ENCODE measurements at regions of chr7 and their contacts with region 1.

Region 1: DNA sequence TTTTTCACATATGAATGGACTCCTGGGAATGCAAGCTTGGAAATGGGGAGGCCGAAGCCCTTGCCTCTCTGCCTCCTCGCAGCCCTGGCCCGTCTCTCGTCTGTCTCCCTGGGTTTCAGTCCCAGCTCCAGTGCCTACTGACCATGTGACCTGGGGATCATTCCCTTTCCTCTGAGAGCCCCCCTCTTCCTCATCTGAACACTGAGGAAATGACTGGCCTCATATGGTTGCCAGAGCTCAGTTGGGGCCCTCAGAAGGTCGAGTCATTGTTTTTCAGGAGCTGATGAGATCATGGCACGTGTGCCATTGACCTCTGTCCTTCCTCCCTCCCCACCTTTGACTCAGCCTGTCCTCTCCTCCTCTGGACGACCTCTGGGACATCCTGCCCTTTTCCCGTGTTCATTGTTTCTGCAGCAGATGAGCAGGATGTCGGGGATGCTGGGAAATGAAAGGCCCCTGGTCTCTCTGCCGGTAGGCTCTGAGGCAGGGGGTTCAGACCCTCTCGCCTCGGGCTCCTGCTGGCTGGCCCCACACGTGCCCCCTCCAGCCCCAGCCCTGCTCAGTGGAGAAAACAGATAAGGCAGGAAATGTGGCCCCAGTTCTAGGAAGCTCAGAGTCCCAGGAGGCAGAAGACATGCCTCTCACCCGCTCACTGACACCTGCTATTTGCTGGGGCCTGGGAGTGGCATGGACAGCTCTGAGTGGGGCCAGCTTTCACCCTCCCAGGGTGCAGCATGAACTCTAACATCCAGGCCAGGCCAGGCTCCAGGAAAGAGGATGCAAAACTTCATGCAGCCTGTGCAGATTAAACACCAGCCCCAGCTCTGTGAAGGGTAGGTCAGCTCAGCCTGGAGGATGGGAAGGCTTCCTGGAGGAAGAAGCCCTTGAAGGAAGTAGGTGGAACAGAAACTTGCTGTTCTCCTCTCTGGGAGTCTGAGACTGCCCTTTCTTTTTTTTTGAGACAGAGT is 8.3 kb upstream of the PPP1R35 start:
- DNase-seq: peak; percentile 81 to 92 (median 85)
- H3K4me3 ChIP-seq: no peak overlapping the region
- H3K4me3 Mint-ChIP-seq: peak overlapping the region; percentile 12 to 33
- H3K27ac ChIP-seq: peak overlapping the region; percentile 25 to 53
- H3K27ac Mint-ChIP-seq: peak overlapping the region; percentile 76 to 95 (median 89)
- H3K4me1 ChIP-seq: peaks cover 23 to 31% of the 10 kb centered on the region in 2 donors
- H3K4me1 Mint-ChIP-seq: peaks cover 37% of the 10 kb centered on the region
- H3K27me3 ChIP-seq: no peaks in the 10 kb centered on the region
- H3K27me3 Mint-ChIP-seq: peaks cover 0 to 1% (median 0%) of the 10 kb centered on the region in 3 donors
- CTCF ChIP-seq: no peak

Region 2: DNA sequence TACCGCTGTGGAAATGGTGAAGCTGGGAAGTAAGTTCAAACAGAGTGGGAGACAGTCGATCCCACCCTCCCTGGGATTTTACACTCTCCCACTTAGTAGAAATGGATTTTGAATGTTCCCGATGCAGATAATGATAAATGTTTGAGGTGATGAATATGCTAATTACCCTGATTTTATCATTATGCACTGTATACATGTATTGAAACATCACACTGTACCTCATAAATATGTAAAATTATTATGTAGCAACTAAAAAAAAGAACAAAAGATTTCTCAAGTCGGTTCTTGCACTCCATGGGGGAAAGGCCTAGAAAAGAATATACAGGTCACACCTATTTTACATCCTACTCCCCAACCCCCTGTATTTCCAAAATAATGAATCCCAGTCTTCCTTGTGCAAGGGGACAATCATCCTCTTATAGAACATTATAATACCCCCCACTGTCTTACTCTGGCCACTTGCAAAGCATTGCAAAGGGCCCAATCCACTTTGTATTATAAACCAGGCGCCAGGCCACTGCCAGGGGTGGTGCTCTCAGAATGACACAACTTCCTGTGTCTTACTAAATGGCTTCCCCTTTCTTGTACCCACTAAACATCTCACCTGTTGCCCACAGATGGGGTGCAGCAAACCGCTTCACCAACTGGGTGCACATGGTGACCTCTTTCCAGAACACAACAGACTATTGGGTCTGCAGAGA is 547.1 kb before region 1 on chr7:
- intact Hi-C with region 1: no loop called
- DNase-seq: no peak
- H3K4me3 ChIP-seq: no peak overlapping the region
- H3K4me3 Mint-ChIP-seq: no peak overlapping the region
- H3K27ac ChIP-seq: no peak overlapping the region
- H3K27ac Mint-ChIP-seq: peak overlapping the region in 1 of 7 donors; percentile 44
- H3K4me1 ChIP-seq: peaks cover 4 to 7% of the 10 kb centered on the region in 2 donors
- H3K4me1 Mint-ChIP-seq: peaks cover 7% of the 10 kb centered on the region
- H3K27me3 ChIP-seq: no peaks in the 10 kb centered on the region
- H3K27me3 Mint-ChIP-seq: no peaks in the 10 kb centered on the region
- CTCF ChIP-seq: no peak

Region 3: GRCh38 chr7:100137851-100138760 is 306.5 kb before region 1 on chr7:
- intact Hi-C with region 1: no loop called
- DNase-seq: no peak
- H3K4me3 ChIP-seq: no peak overlapping the region
- H3K4me3 Mint-ChIP-seq: no peak overlapping the region
- H3K27ac ChIP-seq: no peak overlapping the region
- H3K27ac Mint-ChIP-seq: peak overlapping the region in 1 of 7 donors; percentile 32
- H3K4me1 ChIP-seq: peaks cover 18 to 23% of the 10 kb centered on the region in 2 donors
- H3K4me1 Mint-ChIP-seq: peaks cover 21% of the 10 kb centered on the region
- H3K27me3 ChIP-seq: no peaks in the 10 kb centered on the region
- H3K27me3 Mint-ChIP-seq: peaks cover 4 to 12% (median 5%) of the 10 kb centered on the region in 3 donors
- CTCF ChIP-seq: no peak

Region 4: GRCh38 chr7:100428199-100428966 is 16.2 kb before region 1 on chr7 and contains the start of gene ZCWPW1:
- intact Hi-C with region 1: loop called in 1 of 2 experiments (anchors 2 kb)
- DNase-seq: peak; percentile 91 to 97 (median 95)
- H3K4me3 ChIP-seq: peak within 1 kb of the TSS; percentile 77 to 93 (median 80)
- H3K4me3 Mint-ChIP-seq: peak within 1 kb of the TSS; percentile 96 to 99
- H3K27ac ChIP-seq: peak within 1 kb of the TSS; percentile 99 to 100
- H3K27ac Mint-ChIP-seq: peak within 1 kb of the TSS; percentile 99 to 100 (median 100)
- H3K4me1 ChIP-seq: peaks cover 23 to 31% of the 10 kb centered on the region in 2 donors
- H3K4me1 Mint-ChIP-seq: peaks cover 29% of the 10 kb centered on the region
- H3K27me3 ChIP-seq: no peaks in the 10 kb centered on the region
- H3K27me3 Mint-ChIP-seq: peaks cover 1 to 6% (median 1%) of the 10 kb centered on the region in 3 donors
- CTCF ChIP-seq: no peak
- polyA plus RNA-seq, gene ZCWPW1: 0.60 to 1.9 (median 1.2) TPM

Region 5: GRCh38 chr7:100563809-100564400 is 119.3 kb after region 1 on chr7:
- intact Hi-C with region 1: no loop called
- DNase-seq: peak in 2 of 3 donors; percentile 65 to 69
- H3K4me3 ChIP-seq: no peak overlapping the region
- H3K4me3 Mint-ChIP-seq: peak overlapping the region in 1 of 2 donors; percentile 59
- H3K27ac ChIP-seq: no peak overlapping the region
- H3K27ac Mint-ChIP-seq: peak overlapping the region in 1 of 7 donors; percentile 28
- H3K4me1 ChIP-seq: peaks cover 0 to 10% of the 10 kb centered on the region in 2 donors
- H3K4me1 Mint-ChIP-seq: peaks cover 10% of the 10 kb centered on the region
- H3K27me3 ChIP-seq: peaks cover 0 to 2% of the 10 kb centered on the region in 2 donors
- H3K27me3 Mint-ChIP-seq: peaks cover 0 to 7% (median 2%) of the 10 kb centered on the region in 3 donors
- CTCF ChIP-seq: peak; percentile 97

Measured in CD14-positive monocyte (primary cell).